ENCODE measurements at regions of chr17 and their contacts with region 1.

Region 1: DNA sequence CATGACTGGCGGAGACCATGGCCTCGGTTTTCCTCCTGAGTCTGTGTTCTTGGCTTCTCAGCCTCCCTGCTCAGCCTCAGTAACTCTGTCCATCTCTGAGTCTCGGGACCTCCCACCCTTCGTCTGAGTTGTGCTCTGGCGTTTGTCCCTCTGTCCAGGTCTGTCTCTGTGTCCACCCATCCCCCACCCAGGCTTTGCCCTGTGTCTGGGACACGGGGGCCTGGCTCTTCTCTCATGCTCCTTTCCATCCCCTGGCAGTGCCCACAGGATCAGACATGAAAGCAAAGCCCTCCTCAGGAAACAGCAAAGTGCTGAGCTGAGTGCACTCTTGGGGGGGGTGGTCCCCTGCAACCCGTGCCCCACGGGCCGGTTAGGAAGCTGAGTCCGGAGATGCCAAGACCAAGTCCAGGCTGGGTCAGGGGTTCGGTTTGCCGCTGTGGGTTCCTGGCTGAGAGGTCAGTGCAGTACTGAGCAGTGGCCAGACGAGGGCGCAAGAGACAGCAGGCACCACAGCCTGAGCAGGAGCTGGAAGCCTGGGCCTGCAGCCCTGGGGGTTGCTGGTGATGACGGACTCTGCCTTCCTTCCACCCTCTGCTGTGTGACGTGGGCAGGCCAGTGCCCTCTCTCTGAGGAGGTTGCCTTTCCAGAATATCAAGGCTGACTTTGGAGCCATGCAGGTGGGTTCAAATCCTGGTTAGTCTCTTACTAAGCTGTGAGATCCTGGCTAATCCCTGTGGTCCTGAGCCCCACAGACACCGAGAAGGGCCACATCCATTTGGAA is 2.5 kb downstream of the P2RX1 start:
- DNase-seq: peak; percentile 89
- ATAC-seq: peak; percentile 72
- H3K4me3 Mint-ChIP-seq: no peak overlapping the region
- H3K27ac Mint-ChIP-seq: peak overlapping the region; percentile 64
- H3K4me1 Mint-ChIP-seq: peaks cover 35% of the 10 kb centered on the region
- H3K27me3 Mint-ChIP-seq: no peaks in the 10 kb centered on the region

Region 2: DNA sequence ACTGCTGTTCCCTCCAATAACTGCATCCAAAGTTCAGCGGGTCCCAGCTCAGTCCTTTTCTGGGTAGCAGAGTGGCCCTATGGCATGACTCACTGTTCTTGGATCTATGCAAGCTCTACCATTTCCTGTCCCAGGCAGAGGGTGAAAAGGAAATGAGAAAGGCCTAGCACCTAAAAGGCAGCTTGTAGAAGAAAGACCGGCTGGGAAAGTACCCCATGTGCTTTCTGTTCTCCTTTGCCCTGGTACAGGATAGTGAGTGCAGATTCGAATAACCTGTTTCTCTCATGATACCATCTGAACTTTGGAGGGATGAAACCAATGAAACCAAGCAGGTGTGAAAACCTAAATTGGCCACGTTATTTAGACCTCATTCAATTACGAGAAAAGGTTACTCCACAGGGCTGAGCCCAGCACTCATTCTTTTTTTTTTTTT is 202.8 kb before region 1 on chr17:
- POLR2A ChIA-PET with region 1: no interaction called
- DNase-seq: peak; percentile 45
- ATAC-seq: peak; percentile 99
- H3K4me3 Mint-ChIP-seq: peak overlapping the region; percentile 68
- H3K27ac Mint-ChIP-seq: peak overlapping the region; percentile 90
- H3K4me1 Mint-ChIP-seq: peaks cover 40% of the 10 kb centered on the region
- H3K27me3 Mint-ChIP-seq: no peaks in the 10 kb centered on the region

Region 3: DNA sequence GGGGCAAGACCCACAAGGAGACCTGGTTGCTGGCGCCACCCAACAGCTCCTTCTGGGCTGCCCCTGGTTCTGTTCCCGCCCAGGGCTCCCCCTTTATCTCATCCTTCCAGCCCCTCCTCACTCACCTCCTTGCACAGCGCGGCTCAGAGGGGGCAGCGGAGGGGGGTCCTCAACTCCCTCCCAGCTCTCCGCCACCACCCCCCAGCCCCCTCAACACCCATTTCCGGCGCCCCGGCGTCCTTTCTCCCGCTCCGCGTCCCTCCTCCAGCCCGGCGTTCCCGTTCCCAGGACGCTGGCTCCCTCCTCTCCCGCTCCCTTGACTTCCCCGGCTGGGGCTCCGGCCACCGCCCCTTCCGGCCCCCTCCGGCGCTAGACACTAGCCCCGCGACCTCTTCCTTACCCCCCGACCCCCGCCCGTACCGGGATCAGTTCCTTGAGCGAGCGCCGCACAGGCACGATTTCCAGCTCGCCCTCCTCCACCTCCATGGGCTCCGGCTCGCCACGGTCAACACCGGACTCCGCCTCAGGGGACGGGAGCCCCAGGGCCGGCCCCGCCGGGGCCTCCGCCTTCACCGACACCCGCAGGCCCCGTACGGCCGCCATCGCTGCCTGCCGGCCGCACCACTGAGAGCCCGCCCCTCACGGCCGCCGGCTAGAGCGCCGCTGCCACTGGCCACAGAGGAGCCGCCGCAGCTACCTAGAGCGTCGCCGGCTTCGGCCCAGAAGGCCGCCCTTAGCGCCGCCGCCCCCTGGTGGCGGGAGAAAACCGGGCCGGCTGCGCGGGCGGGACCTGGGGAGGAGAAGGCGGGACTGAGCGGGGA is 67.9 kb before region 1 on chr17 and contains the start of gene NCBP3:
- POLR2A ChIA-PET with region 1: interaction called, 10 read pairs
- DNase-seq: peak; percentile 98
- ATAC-seq: peak; percentile 93
- H3K4me3 Mint-ChIP-seq: peak within 1 kb of the TSS; percentile 96
- H3K27ac Mint-ChIP-seq: peak within 1 kb of the TSS; percentile 93
- H3K4me1 Mint-ChIP-seq: peaks cover 21% of the 10 kb centered on the region
- H3K27me3 Mint-ChIP-seq: peaks cover 8% of the 10 kb centered on the region
- total RNA-seq, gene NCBP3: 48.3 to 53.1 TPM

Region 4: GRCh38 chr17:3965118-3965803 is 51.5 kb after region 1 on chr17:
- POLR2A ChIA-PET with region 1: interaction called, 28 read pairs
- DNase-seq: peak; percentile 79
- ATAC-seq: peak; percentile 63
- H3K4me3 Mint-ChIP-seq: peak overlapping the region; percentile 87
- H3K27ac Mint-ChIP-seq: peak overlapping the region; percentile 93
- H3K4me1 Mint-ChIP-seq: peaks cover 40% of the 10 kb centered on the region
- H3K27me3 Mint-ChIP-seq: peaks cover 4% of the 10 kb centered on the region

Measured in activated naive CD8-positive, alpha-beta T cell treated with anti-CD3 and anti-CD28 coated beads, Interleukin-2, amount 10 ng/mL, durations not matched to agents 7 days and 5 days (primary cell).